ENCODE measurements at regions of chrX and their contacts with region 1.

Region 1: DNA sequence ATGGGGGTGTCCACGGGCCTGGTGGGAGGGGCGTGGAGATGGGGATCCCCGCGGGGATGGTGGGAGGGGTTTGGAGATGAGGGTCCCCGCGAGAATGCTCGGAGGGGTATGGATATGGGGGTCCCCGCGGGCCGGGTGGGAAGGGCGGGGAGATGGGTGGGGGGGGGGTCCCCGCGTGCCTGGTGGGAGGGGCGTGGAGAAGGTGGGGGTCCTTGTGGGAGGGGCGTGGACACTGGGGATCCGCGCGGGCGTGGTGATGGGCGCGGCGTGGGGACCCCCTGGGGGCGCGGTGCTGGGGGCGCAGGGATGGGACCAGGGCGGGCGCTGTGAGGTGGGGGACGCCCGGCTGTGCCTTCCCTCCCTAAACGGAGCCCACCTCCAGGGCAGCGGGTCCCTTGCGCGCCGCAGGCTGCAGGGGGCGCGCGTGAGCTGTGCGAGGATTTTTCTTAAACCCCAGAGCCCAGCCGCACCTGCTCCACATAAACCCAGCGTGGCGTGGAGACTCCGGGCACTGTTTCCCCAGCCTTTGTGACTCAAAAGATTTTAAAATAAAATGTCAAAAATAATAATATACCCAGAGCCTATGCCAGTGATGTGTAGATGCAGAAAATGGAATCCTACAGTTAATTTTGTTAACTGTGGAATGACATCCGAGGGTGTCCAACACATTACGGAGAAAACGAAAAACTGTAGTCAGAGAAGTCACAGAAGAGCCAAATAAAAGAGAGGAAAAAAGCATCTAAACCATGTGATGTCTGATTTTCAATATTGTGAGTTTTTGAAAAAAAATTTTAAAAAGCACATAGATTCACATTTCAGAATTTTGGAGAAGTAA is 1.5 kb upstream of the ASMTL start:
- DNase-seq: peak; percentile 90
- H3K4me3 ChIP-seq: peak overlapping the region; percentile 60
- H3K27ac ChIP-seq: no peak overlapping the region
- H3K4me1 ChIP-seq: no peaks in the 10 kb centered on the region
- H3K27me3 ChIP-seq: no peaks in the 10 kb centered on the region
- CTCF ChIP-seq: peak; percentile 96

Region 2: DNA sequence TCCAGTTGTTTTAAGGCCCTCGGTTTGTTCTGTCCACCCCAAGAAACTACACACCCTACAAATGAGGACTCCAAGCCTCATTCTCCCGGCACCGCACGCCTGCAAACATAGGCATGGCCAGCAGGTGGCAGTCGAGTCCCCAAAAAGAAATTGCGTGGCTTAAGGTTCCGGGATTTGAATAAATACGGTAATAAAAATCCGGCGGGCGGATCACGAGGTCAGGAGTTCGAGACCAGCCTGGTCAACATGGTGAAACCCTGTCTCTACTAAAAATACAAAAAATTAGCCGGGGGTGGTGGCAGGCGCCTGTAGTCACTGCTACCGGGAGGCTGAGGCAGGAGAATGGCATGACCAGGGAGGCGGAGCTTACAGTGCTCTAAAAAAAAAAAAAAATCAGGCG is 207.4 kb before region 1 on chrX:
- CTCF ChIA-PET with region 1: no interaction called
- POLR2A ChIA-PET with region 1: no interaction called
- intact Hi-C with region 1: loop called (anchors 5 kb)
- DNase-seq: peak; percentile 85
- H3K4me3 ChIP-seq: no peak overlapping the region
- H3K27ac ChIP-seq: no peak overlapping the region
- H3K4me1 ChIP-seq: peaks cover 9% of the 10 kb centered on the region
- H3K27me3 ChIP-seq: no peaks in the 10 kb centered on the region
- CTCF ChIP-seq: peak; percentile 83

Region 3: GRCh38 chrX:1391707-1392375 is 62.3 kb before region 1 on chrX and contains the start of gene SLC25A6:
- CTCF ChIA-PET with region 1: no interaction called
- POLR2A ChIA-PET with region 1: no interaction called
- intact Hi-C with region 1: loop called (anchors 2 kb)
- DNase-seq: peak; percentile 98
- H3K4me3 ChIP-seq: peak within 1 kb of the TSS; percentile 100
- H3K27ac ChIP-seq: peak within 1 kb of the TSS; percentile 100
- H3K4me1 ChIP-seq: peaks cover 28% of the 10 kb centered on the region
- H3K27me3 ChIP-seq: no peaks in the 10 kb centered on the region
- CTCF ChIP-seq: no peak; the same call in 1 of the 2 replicates
- total RNA-seq, gene SLC25A6: 423 and 432 TPM in 2 replicates

Region 4: GRCh38 chrX:1580735-1581531 is 126.8 kb after region 1 on chrX:
- CTCF ChIA-PET with region 1: no interaction called
- POLR2A ChIA-PET with region 1: no interaction called
- intact Hi-C with region 1: loop called (anchors 2 kb)
- DNase-seq: peak; percentile 89
- H3K4me3 ChIP-seq: no peak overlapping the region
- H3K27ac ChIP-seq: no peak overlapping the region
- H3K4me1 ChIP-seq: no peaks in the 10 kb centered on the region
- H3K27me3 ChIP-seq: no peaks in the 10 kb centered on the region
- CTCF ChIP-seq: peak; percentile 73

Region 5: DNA sequence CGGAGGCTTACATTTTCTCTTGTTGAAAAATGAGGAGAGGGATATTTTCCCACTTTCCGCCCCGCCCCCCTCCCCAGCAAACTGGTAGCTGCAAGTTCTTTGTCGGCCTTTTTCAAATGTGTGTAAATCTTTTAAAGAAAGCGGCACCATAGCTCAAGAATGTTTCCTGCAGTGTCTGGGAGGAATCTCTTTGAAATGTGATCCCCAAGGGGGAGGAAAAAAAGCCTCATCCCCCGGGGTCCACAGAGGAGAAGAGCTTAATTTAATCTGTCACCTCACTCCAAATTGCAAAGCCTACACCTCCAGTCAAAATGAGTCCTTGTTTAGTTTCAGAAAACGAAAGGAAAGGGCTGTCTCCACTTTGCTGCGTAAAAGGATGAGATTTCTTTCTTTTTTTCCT is 195.5 kb after region 1 on chrX:
- CTCF ChIA-PET with region 1: no interaction called
- POLR2A ChIA-PET with region 1: no interaction called
- intact Hi-C with region 1: loop called (anchors 10 kb)
- DNase-seq: peak; percentile 41
- H3K4me3 ChIP-seq: no peak overlapping the region
- H3K27ac ChIP-seq: no peak overlapping the region
- H3K4me1 ChIP-seq: peaks cover 6% of the 10 kb centered on the region
- H3K27me3 ChIP-seq: no peaks in the 10 kb centered on the region
- CTCF ChIP-seq: no peak

Region 6: GRCh38 chrX:1741890-1742289 is 287.7 kb after region 1 on chrX:
- CTCF ChIA-PET with region 1: no interaction called
- POLR2A ChIA-PET with region 1: no interaction called
- intact Hi-C with region 1: no loop called
- DNase-seq: no peak
- H3K4me3 ChIP-seq: no peak overlapping the region
- H3K27ac ChIP-seq: no peak overlapping the region
- H3K4me1 ChIP-seq: no peaks in the 10 kb centered on the region
- H3K27me3 ChIP-seq: peaks cover 5% of the 10 kb centered on the region
- CTCF ChIP-seq: no peak

Region 7: DNA sequence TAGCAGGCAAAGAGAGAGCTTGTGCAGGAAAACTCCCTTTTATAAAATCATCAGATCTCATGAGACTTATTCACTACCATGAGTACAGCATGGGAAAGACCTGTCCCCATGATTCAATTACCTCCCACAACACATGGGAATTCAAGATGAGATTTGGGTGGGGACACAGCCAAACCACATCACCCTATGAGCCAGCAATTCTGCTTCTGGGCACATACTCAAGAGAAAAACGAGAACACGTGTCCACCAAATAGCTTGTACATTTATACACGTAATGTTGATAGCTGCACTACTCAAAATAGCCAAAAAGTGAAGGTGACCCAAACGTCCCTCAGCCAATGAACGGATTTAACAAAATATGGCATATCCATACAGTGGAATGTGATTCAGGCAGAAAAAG is 1141.1 kb after region 1 on chrX:
- CTCF ChIA-PET with region 1: no interaction called
- POLR2A ChIA-PET with region 1: no interaction called
- intact Hi-C with region 1: loop called (anchors 10 kb)
- DNase-seq: no peak
- H3K4me3 ChIP-seq: no peak overlapping the region
- H3K27ac ChIP-seq: no peak overlapping the region
- H3K4me1 ChIP-seq: peaks cover 5% of the 10 kb centered on the region
- H3K27me3 ChIP-seq: no peaks in the 10 kb centered on the region
- CTCF ChIP-seq: no peak

Measured in A673 (cell line).